Posterior cingulate gyrus (tissue), 11 donors: ENCODE measurements at regions of chr9 and their contacts with region 1.

Region 1: GRCh38 chr9:68704814-68705530 is at the start of gene PIP5K1B:
- DNase-seq: peak; percentile 27 to 96 (median 69)

Region 2: DNA sequence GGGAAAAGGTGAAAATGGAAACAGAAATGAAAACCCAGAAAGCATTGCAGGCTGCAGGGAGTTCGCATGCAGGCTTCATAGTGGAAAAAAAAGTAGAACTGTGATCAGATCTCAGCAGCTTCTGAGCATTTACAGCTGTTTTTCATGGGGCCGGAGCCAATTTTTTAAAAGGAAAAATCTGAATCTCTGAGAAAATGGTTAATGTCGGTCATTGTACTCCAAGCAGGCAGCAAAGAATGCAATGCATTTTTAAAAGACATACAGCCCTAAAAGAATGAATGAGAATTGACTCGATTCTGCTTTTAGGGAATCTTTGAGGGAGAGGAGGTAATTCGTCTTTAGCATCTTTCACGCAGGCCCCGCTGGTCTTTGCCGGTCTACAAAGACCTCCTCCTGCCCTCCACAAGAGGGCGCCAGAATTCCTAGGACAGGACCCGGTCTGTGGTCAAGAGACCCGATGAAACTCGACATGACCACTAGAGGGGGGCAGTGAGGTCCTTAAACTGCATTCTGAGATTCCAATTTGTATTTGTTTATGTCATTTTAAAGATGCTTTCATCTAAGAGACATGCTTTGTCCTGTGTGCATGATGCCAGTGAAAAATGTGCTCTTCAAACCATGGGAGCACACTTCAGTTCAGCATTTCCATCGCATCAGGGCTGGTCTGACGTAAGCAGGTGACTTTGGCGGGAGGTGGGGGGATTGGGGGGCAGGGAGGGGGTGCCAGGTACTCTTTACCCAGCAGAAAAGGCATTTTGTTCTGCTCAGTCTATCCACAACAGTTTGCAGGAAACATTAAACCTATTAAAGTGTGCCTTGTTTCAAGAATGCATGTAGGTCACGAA is 120.6 kb before region 1 on chr9:
- intact Hi-C with region 1: loop called (anchors 5 kb)
- DNase-seq: peak; percentile 60 to 97 (median 81)

Region 3: DNA sequence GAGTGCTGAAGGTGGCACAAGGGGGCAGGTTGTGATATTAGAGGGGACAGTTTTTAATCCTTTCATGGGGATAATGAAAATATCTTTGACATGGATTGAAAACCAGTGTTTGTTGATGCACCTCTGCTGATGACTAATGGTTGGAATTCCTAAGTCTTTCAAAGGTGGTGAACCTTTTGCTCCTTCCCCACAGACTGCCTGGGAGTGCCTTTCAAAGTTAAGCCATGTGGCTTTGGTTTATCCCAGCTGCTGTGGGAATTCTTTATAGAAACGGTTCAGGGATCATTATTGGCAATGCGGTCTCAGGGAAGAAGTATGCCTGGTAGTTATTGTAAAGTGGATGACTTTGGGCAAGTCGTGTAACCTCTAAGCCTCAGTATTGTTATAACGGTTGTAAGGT is 45.8 kb after region 1 on chr9:
- intact Hi-C with region 1: no loop called
- DNase-seq: no peak

Region 4: GRCh38 chr9:68779558-68780384 is 74.8 kb after region 1 on chr9:
- intact Hi-C with region 1: loop called (anchors 2 kb)
- DNase-seq: peak; percentile 74 to 98 (median 86)

Region 5: GRCh38 chr9:68999393-69000105 is 294.6 kb after region 1 on chr9:
- intact Hi-C with region 1: loop called (anchors 5 kb)
- DNase-seq: peak in 8 of 10 donors; percentile 21 to 87 (median 60)